ENCODE measurements at regions of chr17 and their contacts with region 1.

Region 1: DNA sequence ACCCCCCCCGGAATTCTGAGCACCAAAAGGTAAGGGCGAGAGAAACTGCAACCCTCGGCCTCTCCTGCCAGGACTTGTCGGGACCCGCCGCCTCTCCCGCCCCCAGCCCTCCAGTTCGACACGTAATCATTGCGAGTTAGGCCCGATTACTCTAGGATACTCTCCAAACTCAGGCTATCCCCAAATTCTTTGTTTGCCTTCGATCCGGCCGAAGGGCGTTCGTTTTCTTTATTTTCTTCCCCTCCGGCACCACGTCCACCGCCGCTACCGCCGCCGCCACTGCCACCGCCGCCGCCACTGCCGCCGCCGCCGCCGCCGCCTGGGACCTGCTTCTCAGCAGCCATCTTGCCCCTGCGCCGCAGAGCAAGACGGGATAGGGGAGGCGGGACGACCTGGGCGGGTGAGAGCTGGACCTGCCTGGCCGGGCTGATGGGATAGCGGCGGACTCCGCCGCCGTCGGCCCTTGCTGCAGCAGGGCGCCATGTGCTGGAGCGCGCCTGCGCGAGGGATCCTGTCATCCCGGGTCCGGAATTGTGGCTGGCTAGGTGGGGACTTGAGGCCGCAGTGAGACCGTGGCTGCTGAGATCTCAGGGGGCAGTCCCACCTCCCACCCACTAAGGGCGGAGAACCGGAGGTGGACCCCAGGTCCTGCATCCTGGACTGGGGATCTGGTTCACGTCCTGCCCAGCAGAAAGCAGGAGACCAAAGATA is at the start of gene SRP68:
- DNase-seq: peak; percentile 86
- H3K4me3 Mint-ChIP-seq: peak within 1 kb of the TSS; percentile 95
- H3K27ac Mint-ChIP-seq: peak within 1 kb of the TSS; percentile 98
- H3K4me1 Mint-ChIP-seq: peaks cover 49% of the 10 kb centered on the region
- H3K27me3 Mint-ChIP-seq: peaks cover 33% of the 10 kb centered on the region
- total RNA-seq, gene SRP68: 127 to 131 TPM

Region 2: GRCh38 chr17:76103274-76104139 is 31.2 kb after region 1 on chr17 and contains the start of gene EXOC7:
- CTCF ChIA-PET with region 1: no interaction called
- intact Hi-C with region 1: loop called (anchors 1 kb)
- DNase-seq: peak; percentile 95
- H3K4me3 Mint-ChIP-seq: peak within 1 kb of the TSS; percentile 94
- H3K27ac Mint-ChIP-seq: peak within 1 kb of the TSS; percentile 92
- H3K4me1 Mint-ChIP-seq: peaks cover 19% of the 10 kb centered on the region
- H3K27me3 Mint-ChIP-seq: no peaks in the 10 kb centered on the region
- total RNA-seq, gene EXOC7: 43.5 to 46.6 TPM

Measured in activated naive CD4-positive, alpha-beta T cell treated with anti-CD3 and anti-CD28 coated beads for 36 hours (primary cell).